ENCODE measurements at regions of chr19 and their contacts with region 1.

Region 1: DNA sequence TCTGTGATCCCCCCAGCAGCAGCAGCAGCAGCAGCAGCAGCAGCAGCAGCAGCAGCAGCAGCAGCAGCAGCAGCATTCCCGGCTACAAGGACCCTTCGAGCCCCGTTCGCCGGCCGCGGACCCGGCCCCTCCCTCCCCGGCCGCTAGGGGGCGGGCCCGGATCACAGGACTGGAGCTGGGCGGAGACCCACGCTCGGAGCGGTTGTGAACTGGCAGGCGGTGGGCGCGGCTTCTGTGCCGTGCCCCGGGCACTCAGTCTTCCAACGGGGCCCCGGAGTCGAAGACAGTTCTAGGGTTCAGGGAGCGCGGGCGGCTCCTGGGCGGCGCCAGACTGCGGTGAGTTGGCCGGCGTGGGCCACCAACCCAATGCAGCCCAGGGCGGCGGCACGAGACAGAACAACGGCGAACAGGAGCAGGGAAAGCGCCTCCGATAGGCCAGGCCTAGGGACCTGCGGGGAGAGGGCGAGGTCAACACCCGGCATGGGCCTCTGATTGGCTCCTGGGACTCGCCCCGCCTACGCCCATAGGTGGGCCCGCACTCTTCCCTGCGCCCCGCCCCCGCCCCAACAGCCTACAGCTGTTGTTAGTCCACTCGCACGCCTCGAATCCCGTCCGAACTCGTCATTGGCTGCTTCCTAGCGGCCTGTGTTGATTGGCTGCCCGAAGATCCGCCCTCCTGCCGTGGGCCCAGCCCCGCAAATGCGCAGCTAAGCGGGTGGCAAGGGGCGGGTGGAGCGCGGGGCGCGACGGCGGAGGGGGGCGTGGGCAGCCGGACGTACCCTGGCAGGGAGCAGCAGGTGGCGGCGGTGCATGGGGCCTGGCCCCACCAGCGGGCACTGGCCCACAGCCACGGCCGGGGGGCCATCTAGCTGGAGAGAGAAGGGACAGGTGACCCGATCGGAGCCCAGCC is 1.4 kb upstream of the SIX5 start:
- DNase-seq: peak; percentile 88
- CTCF ChIP-seq: peak; percentile 94

Region 2: DNA sequence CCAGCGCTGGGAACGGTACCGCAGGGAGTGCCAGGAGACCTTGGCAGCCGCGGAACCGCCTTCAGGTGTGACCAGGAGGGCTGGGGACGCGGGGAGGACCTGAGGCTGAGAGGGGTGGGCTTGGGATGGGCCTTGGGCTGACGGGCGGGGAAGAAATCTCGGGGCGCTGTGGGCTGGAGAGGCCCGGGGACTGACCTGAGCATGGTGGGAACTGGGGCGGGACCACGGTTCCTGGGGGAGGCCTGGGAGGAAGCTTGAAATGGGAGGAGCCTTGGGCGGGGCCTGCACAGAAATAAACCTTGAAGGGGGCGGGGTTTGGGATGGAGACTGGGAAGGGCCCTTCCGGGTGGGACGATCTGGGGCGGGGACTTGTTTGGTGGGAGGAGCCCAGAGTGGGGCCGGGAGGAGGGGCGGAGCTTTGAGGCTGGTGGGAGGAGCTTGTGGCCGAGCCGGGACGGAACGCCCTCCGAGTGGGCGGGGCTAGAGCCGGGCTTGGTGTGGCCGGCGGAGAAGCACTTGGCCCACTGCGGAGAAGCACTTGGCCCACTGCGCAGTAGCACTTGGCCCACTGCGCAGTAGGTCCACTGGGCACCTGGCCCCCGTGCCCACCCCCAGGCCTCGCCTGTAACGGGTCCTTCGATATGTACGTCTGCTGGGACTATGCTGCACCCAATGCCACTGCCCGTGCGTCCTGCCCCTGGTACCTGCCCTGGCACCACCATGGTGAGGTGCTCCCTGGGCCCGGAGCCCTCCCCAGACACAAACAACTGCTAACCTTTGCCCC is 99.6 kb before region 1 on chr19:
- CTCF ChIA-PET with region 1: no interaction called
- POLR2A ChIA-PET with region 1: no interaction called
- DNase-seq: peak; percentile 99
- CTCF ChIP-seq: no peak

Region 3: DNA sequence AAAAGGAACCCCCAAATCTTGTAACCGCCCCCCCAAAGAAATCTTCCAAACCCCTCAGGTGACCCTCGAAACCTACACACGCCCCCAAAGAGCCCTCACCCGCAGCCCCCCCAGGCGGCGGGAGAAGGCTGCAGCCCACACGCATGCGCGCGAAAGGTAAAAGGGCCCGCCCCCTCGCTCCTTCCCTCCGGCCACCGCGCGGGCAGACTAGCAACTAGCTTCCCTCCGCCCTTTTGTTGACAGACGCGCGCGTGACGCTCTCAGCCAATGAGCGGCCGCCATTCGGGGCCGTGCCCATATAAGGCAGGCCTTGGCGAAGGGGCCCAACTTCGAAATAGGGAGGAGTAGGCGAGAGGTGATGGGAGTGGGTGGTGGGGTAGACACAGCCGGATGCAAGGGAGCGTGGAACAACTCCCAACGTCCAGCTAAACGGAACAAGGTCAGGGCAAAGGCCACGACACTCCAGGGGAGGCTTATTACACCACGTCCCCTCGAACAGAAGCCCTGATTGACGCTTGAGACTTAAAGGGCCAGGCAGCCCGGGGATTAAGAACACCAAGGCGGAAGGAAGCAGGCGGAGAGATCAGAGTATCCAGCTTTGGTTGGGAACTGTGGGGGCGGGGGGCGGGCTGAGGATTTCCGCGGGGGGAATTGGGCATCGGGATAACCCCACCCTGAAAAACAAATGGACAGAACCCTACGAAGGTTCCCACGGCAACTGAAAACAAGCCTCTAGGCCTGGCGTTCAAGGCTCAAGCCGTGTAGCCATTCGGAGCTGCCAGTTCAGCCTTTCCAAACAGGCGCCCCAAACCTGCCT is 53.1 kb before region 1 on chr19:
- CTCF ChIA-PET with region 1: interaction called, 3 read pairs
- POLR2A ChIA-PET with region 1: interaction called, 13 read pairs
- DNase-seq: peak; percentile 98
- CTCF ChIP-seq: peak; percentile 11

Region 4: GRCh38 chr19:45753546-45753945 is 16.9 kb before region 1 on chr19:
- CTCF ChIA-PET with region 1: interaction called, 30 read pairs
- POLR2A ChIA-PET with region 1: interaction called, 9 read pairs
- DNase-seq: no peak
- CTCF ChIP-seq: peak; percentile 19

Region 5: GRCh38 chr19:45798995-45799517 is 28.6 kb after region 1 on chr19:
- CTCF ChIA-PET with region 1: interaction called, 77 read pairs
- POLR2A ChIA-PET with region 1: no interaction called
- DNase-seq: peak; percentile 81
- CTCF ChIP-seq: peak; percentile 72

Region 6: DNA sequence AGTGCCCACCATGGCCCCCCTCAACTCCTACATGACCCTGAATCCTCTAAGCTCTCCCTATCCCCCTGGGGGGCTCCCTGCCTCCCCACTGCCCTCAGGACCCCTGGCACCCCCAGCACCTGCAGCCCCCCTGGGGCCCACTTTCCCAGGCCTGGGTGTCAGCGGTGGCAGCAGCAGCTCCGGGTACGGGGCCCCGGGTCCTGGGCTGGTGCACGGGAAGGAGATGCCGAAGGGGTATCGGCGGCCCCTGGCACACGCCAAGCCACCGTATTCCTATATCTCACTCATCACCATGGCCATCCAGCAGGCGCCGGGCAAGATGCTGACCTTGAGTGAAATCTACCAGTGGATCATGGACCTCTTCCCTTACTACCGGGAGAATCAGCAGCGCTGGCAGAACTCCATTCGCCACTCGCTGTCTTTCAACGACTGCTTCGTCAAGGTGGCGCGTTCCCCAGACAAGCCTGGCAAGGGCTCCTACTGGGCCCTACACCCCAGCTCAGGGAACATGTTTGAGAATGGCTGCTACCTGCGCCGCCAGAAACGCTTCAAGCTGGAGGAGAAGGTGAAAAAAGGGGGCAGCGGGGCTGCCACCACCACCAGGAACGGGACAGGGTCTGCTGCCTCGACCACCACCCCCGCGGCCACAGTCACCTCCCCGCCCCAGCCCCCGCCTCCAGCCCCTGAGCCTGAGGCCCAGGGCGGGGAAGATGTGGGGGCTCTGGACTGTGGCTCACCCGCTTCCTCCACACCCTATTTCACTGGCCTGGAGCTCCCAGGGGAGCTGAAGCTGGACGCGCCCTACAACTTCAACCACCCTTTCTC is 101.9 kb after region 1 on chr19:
- CTCF ChIA-PET with region 1: no interaction called
- POLR2A ChIA-PET with region 1: no interaction called
- DNase-seq: no peak
- CTCF ChIP-seq: no peak

Region 7: GRCh38 chr19:45886427-45887199 is 116.2 kb after region 1 on chr19:
- CTCF ChIA-PET with region 1: interaction called, 14 read pairs
- POLR2A ChIA-PET with region 1: interaction called, 7 read pairs
- DNase-seq: peak; percentile 90
- CTCF ChIP-seq: no peak